Lower leg skin (tissue), 4 donors: ENCODE measurements at regions of chr5 and their contacts with region 1.

Region 1: DNA sequence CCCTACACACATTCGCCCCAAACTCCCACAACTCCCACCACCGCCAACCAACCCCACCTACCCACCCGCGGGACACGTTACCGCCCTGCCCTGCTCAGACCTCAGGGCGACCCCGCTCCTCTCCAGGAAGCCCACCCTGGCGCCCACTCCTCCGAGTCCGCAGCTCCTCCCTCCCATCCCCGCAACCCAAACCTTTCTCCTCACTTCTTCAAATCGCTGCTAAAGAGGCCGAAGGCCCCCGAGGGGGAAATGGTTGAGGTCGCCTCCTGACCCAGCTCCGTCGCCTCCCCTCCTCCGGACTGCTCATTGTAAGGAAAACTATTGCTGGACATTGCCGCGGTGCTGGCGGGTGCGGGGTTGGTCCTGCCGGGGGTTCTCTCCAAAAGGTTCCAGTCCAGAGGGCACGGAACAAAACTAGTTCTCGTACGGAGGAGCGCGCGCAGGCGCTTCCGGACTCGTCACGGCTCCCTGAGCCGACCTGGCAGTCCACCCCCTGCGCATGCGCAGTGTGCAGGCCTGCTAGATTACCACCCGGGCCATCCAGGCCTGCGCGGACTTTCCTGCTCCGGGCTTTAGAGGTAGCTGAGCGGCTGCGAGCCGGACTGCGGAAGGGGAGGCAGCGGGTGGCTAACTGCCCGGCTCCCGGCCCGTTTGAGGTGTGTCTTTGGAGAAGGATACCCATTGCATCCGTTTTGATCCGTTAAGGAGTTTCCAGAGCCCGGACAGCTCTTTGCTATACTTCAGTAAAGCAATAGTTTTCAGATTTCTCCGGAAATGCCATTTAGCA is at the start of gene AP3B1:
- DNase-seq: peak; percentile 98 to 100
- H3K4me3 ChIP-seq: peak within 1 kb of the TSS; percentile 98
- CTCF ChIP-seq: no peak
- POLR2A ChIP-seq: peak in 1 of 2 donors; percentile 65
- total RNA-seq, gene AP3B1: 23.5 to 37.7 (median 33.3) TPM

Region 2: DNA sequence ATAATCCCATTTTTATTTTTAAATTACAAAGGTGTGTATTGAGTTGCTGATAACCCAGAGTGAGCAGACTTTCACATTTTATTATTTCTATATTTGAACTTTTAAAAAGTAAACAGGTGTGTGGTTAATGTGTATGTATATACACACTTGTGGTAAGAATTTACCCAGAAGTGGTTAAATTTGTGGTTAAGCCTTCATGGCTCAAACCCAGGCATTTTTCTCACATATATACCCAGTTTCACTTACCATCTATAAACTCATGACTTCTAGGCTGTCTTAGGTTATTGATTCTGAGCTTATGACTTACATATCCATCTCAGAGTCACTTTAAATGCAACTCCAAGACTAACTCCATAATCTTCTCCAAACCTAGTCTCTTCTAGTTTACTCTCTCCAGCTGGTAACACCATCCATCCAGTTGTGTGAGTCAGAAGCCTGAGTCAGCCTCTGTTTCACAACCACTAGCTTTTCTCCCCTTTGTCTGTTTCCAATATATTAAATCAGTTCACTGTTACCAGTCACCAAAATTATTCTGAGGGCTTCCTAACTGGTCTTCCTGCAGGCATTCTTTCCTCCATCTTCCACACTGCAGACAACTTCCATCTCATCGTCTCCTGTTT is 1227.5 kb before region 1 on chr5:
- intact Hi-C with region 1: loop called (anchors 10 kb)
- DNase-seq: no peak
- H3K4me3 ChIP-seq: no peak overlapping the region
- CTCF ChIP-seq: no peak
- POLR2A ChIP-seq: no peak

Region 3: GRCh38 chr5:77328930-77329647 is 965.4 kb before region 1 on chr5:
- intact Hi-C with region 1: no loop called
- DNase-seq: no peak
- H3K4me3 ChIP-seq: no peak overlapping the region
- CTCF ChIP-seq: no peak
- POLR2A ChIP-seq: no peak

Region 4: DNA sequence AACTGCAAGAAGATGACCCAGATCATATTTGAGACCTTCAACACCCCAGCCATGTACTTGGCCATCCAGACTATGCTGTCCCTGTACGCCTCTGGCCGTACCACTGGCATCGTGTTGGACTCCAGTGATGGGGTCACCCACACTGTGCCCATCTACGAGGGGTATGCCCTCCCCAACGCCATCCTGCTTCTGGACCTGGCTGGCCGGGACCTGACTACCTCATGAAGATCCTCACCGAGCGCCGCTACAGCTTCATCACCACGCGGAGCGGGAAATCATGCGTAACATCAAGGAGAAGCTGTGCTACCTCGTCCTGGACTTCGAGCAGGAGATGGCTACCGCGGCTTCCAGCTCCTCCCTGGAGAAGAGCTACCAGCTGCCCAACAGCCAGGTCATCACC is 509.2 kb before region 1 on chr5:
- intact Hi-C with region 1: no loop called
- DNase-seq: no peak
- H3K4me3 ChIP-seq: no peak overlapping the region
- CTCF ChIP-seq: no peak
- POLR2A ChIP-seq: no peak

Region 5: GRCh38 chr5:77876862-77877502 is 417.5 kb before region 1 on chr5:
- intact Hi-C with region 1: no loop called
- DNase-seq: no peak
- H3K4me3 ChIP-seq: no peak overlapping the region
- CTCF ChIP-seq: no peak
- POLR2A ChIP-seq: no peak

Region 6: DNA sequence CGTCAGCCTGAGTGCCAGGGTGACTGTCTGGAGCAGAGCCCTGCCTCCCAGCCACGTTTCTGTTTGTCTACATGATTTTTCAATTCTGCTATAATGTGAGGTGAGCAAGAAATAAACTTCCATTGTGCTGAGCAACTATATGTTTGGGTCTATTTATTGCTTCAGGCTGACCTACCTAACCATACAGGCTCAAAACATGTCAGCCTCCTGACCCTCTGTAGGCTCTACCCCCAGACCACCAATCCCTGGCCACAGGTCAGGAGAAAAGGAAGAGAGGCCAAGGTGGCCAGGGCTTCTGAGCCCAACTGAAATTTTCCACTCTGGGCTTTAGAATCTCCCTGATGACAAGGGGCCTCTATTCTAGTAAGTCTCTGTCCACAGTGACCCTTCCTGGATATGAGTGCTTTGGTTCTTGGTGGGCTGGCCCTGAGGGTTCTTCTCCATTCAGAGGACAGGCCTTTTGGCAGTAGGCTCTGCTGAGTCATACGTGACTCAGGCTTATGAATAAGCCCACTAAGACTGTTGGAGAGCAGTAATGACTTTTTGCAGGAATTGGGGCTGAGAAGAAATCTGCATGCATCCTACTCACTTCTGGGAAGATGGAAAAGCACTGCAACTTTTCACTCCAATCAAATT is 401.1 kb before region 1 on chr5:
- intact Hi-C with region 1: no loop called
- DNase-seq: no peak
- H3K4me3 ChIP-seq: no peak overlapping the region
- CTCF ChIP-seq: no peak
- POLR2A ChIP-seq: no peak

Region 7: GRCh38 chr5:78359831-78360673 is 65.6 kb after region 1 on chr5 and contains the start of gene SCAMP1:
- intact Hi-C with region 1: loop called (anchors 2 kb)
- DNase-seq: peak; percentile 89 to 97
- H3K4me3 ChIP-seq: peak within 1 kb of the TSS; percentile 93
- CTCF ChIP-seq: no peak
- POLR2A ChIP-seq: no peak
- total RNA-seq, gene SCAMP1: 28.3 to 33.1 (median 30.9) TPM